Activated CD4-positive, alpha-beta T cell treated with anti-CD3 and anti-CD28 coated beads for 36 hours (primary cell): ENCODE measurements at regions of chr10 and their contacts with region 1.

Region 1: GRCh38 chr10:110007701-110008517 is at the start of gene ADD3:
- DNase-seq: peak; percentile 94
- ATAC-seq: peak; percentile 65
- H3K4me3 Mint-ChIP-seq: no peak within 1 kb of the TSS
- H3K27ac Mint-ChIP-seq: peak within 1 kb of the TSS; percentile 94
- H3K4me1 Mint-ChIP-seq: peaks cover 49% of the 10 kb centered on the region
- H3K27me3 Mint-ChIP-seq: no peaks in the 10 kb centered on the region
- total RNA-seq, gene ADD3: 72.5 to 101 TPM

Region 2: DNA sequence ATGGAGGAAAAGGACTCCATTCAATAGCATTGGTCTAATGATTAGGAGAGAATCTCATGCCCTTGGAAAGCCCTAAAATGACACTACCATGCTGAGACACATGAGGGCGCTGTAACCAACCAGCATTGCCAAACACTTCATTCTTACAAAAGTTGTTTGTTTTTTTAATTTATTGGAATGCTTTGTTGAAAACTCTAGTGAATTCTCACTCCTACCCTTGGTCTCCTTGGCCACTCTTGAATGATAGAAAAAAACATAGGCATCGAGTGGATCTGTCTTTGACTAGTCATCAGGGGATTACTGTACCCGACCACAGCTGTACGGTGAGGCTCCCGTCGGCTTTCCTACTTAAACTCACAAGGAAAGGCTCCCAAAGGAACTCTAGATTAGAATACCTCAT is 29.4 kb before region 1 on chr10:
- CTCF ChIA-PET with region 1: interaction called, 9 read pairs
- POLR2A ChIA-PET with region 1: no interaction called
- intact Hi-C with region 1: loop called (anchors 1 to 5 kb)
- DNase-seq: peak; percentile 79
- ATAC-seq: peak; percentile 75
- H3K4me3 Mint-ChIP-seq: no peak overlapping the region
- H3K27ac Mint-ChIP-seq: peak overlapping the region; percentile 6
- H3K4me1 Mint-ChIP-seq: peaks cover 9% of the 10 kb centered on the region
- H3K27me3 Mint-ChIP-seq: no peaks in the 10 kb centered on the region

Region 3: DNA sequence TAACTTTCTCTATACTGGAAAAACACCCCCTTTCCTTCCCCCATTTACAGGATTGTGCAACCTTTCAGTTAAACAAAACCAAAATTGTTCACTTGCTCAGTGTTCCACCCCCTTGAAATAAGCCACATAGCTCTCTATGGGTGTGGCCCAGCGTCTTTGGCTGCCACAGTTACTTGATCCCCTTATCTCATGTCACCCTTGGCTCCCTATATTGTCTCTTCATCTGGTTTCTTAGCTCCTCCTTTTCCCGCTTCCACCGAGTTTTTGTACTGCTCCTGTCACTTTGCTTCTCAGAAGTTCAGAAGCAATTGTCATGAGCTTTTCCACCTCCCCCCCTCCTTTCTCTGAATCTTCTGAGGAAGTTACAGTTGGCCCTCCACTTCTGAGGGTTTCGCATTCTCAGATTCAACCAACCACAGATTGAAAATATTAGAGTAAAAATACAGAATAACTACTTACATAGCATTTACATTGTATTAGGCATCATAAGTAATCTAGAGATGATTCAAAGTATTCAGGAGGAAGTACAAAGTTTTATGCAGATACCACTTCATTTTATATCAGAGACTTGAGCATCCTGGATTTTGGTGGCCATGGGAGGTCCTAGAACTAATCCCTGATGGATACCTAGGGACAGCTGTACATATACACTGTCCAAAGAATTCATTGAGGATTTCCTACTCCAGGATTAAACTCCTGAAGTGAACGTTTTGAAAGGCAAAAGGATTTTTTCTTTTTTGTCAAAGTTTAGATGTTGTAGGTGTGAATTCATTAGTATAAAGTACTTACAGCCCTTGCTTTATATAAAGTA is 60.3 kb after region 1 on chr10:
- CTCF ChIA-PET with region 1: no interaction called
- POLR2A ChIA-PET with region 1: interaction called, 6 read pairs
- intact Hi-C with region 1: loop called in 1 of 2 experiments (anchors 2 kb)
- DNase-seq: peak; percentile 71
- ATAC-seq: peak; percentile 89
- H3K4me3 Mint-ChIP-seq: peak overlapping the region; percentile 57
- H3K27ac Mint-ChIP-seq: peak overlapping the region; percentile 90
- H3K4me1 Mint-ChIP-seq: peaks cover 88% of the 10 kb centered on the region
- H3K27me3 Mint-ChIP-seq: no peaks in the 10 kb centered on the region

Region 4: GRCh38 chr10:110137142-110137545 is 129.2 kb after region 1 on chr10:
- CTCF ChIA-PET with region 1: interaction called, 4 read pairs
- POLR2A ChIA-PET with region 1: no interaction called
- intact Hi-C with region 1: loop called in 1 of 2 experiments (anchors 2 kb)
- DNase-seq: no peak
- ATAC-seq: peak; percentile 78
- H3K4me3 Mint-ChIP-seq: no peak overlapping the region
- H3K27ac Mint-ChIP-seq: peak overlapping the region; percentile 7
- H3K4me1 Mint-ChIP-seq: peaks cover 34% of the 10 kb centered on the region
- H3K27me3 Mint-ChIP-seq: no peaks in the 10 kb centered on the region

Region 5: DNA sequence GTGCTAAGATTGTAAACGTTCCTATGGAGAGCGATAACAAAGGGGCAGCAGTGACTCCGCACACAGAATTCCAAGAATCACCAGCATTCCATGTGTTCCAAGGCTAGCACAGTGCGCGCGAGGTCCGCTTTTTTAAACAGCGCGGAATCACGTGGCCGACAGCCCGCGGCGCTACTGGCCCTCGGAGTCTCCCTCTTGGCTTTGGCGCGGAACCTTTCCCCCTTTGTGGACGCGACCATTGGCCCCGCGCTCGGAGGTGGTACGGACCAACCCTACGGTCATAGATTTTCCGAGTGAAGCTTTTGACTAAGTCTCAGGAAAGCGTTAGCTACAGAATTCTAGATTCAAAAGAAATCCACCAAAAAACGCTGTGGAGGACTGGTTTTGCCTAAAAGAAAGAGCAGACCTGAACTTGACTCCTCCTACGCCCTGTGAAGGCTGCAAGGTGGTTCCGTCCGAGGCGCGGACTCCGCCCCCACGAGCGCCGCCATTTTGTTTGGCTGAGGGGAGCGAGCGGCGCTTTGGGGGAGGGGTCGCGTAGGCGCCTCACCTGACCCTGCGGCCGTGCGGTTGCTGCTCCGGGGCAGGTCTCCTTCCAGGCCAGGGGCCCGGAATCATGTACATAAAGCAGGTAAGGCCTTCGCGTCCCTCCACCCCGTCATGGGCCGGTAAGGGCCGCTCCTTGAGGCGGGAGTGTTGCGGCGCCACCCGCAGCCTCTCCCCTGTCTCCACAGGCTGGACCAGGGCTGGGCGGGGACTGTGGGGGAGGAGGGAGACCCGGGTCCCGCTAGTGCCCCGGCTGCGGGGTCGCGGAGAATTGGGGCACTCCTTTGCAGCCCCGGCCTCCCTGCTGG is 559.5 kb after region 1 on chr10 and contains the start of gene SMC3:
- CTCF ChIA-PET with region 1: no interaction called
- POLR2A ChIA-PET with region 1: no interaction called
- intact Hi-C with region 1: loop called in 1 of 2 experiments (anchors 5 kb)
- DNase-seq: peak; percentile 95
- ATAC-seq: peak; percentile 84
- H3K4me3 Mint-ChIP-seq: peak within 1 kb of the TSS; percentile 93
- H3K27ac Mint-ChIP-seq: peak within 1 kb of the TSS; percentile 99
- H3K4me1 Mint-ChIP-seq: peaks cover 35% of the 10 kb centered on the region
- H3K27me3 Mint-ChIP-seq: peaks cover 13% of the 10 kb centered on the region
- total RNA-seq, gene SMC3: 76.8 to 83.5 TPM